MCF 10A (cell line): ENCODE measurements at regions of chr3 and their contacts with region 1.

Region 1: DNA sequence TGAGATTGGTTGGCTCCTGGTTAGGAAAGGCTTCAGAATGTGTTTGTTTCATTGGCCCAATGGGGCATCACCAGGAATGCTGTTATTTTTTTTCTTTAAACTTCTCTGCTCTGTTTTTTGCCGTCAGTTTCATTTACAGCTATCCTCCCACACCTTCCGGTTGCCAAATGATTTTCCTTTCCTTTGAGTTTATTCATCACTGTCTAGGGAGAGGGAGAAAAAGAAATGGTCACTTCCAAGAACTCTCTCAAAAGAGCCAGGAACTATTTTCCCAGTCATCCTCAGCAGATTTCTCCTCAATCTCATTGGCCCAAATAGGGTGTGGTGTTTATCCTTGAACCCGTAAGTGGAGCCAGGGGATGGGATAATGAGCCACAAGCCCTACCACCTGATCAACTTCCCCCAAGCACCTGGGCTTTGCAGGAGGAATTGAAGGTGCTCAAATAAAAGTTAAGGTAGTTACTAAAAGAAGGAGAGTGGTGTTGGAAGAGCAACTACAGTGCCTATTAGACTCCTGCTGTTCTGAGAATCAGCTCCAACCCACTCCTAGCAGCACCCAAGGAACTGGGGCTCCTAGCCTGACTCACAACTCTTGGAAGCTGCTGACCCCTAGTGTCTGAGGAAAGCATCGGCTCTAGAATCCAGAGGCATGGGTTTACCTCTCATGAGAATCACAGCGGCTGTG is 183.8 kb upstream of the IL12A start:
- DNase-seq: peak; percentile 93
- H3K4me3 Mint-ChIP-seq: no peak overlapping the region
- H3K27ac Mint-ChIP-seq: no peak overlapping the region
- H3K4me1 Mint-ChIP-seq: peaks cover 32% of the 10 kb centered on the region
- H3K27me3 Mint-ChIP-seq: no peaks in the 10 kb centered on the region
- CTCF ChIP-seq: peak; percentile 91

Region 2: DNA sequence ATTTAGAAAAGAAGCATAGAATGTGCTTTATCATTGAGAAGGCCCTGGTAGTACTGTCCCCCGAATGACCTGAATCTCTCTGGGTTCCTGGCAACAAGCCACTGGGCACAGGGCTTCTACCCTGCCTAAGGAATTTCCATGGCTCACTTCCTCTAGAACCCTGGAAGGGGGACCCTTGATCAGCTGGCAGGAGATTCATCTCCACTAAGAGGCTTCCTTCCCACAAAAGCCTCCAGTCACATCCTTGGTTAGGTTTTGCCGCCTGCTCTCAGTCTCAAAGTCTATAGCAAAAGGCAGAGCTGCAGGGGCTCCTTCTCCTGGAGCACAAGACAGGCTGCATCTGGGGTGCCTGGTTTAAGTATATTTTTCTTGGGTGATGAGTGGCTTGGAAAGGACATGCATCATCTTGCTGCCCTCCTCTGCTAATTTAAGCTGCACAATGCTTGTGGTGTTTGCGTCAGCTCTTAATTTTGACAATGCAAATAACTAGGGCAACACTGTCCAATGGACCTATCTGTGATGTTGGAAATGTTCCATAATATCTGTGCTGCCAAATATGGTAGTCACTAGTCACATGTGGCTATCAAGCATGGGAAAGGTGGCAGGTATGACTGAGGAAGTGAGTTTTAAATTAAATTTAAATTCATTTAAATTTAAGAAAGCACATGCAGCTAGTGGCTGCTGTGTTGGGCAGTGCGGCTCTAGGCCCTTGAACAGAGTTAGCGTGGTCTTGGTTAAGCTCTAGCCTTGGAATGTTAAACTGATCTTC is 1039.2 kb before region 1 on chr3:
- CTCF ChIA-PET with region 1: no interaction called
- POLR2A ChIA-PET with region 1: no interaction called
- intact Hi-C with region 1: no loop called
- DNase-seq: no peak
- H3K4me3 Mint-ChIP-seq: no peak overlapping the region
- H3K27ac Mint-ChIP-seq: no peak overlapping the region
- H3K4me1 Mint-ChIP-seq: peaks cover 25% of the 10 kb centered on the region
- H3K27me3 Mint-ChIP-seq: no peaks in the 10 kb centered on the region
- CTCF ChIP-seq: no peak

Region 3: GRCh38 chr3:159322322-159322939 is 482.4 kb before region 1 on chr3:
- CTCF ChIA-PET with region 1: interaction called, 7 read pairs
- POLR2A ChIA-PET with region 1: no interaction called
- intact Hi-C with region 1: loop called (anchors 1 kb)
- DNase-seq: peak; percentile 40
- H3K4me3 Mint-ChIP-seq: no peak overlapping the region
- H3K27ac Mint-ChIP-seq: no peak overlapping the region
- H3K4me1 Mint-ChIP-seq: no peaks in the 10 kb centered on the region
- H3K27me3 Mint-ChIP-seq: no peaks in the 10 kb centered on the region
- CTCF ChIP-seq: peak; percentile 60

Region 4: GRCh38 chr3:159616212-159616825 is 188.5 kb before region 1 on chr3:
- CTCF ChIA-PET with region 1: interaction called, 83 read pairs
- POLR2A ChIA-PET with region 1: interaction called, 5 read pairs
- intact Hi-C with region 1: loop called (anchors 1 kb)
- DNase-seq: peak; percentile 67
- H3K4me3 Mint-ChIP-seq: no peak overlapping the region
- H3K27ac Mint-ChIP-seq: no peak overlapping the region
- H3K4me1 Mint-ChIP-seq: peaks cover 14% of the 10 kb centered on the region
- H3K27me3 Mint-ChIP-seq: no peaks in the 10 kb centered on the region
- CTCF ChIP-seq: peak; percentile 83

Region 5: GRCh38 chr3:159726231-159726964 is 78.5 kb before region 1 on chr3:
- CTCF ChIA-PET with region 1: interaction called, 41 read pairs
- POLR2A ChIA-PET with region 1: interaction called, 3 read pairs
- intact Hi-C with region 1: no loop called
- DNase-seq: peak; percentile 88
- H3K4me3 Mint-ChIP-seq: no peak overlapping the region
- H3K27ac Mint-ChIP-seq: peak overlapping the region; percentile 61
- H3K4me1 Mint-ChIP-seq: peaks cover 23% of the 10 kb centered on the region
- H3K27me3 Mint-ChIP-seq: no peaks in the 10 kb centered on the region
- CTCF ChIP-seq: no peak

Region 6: DNA sequence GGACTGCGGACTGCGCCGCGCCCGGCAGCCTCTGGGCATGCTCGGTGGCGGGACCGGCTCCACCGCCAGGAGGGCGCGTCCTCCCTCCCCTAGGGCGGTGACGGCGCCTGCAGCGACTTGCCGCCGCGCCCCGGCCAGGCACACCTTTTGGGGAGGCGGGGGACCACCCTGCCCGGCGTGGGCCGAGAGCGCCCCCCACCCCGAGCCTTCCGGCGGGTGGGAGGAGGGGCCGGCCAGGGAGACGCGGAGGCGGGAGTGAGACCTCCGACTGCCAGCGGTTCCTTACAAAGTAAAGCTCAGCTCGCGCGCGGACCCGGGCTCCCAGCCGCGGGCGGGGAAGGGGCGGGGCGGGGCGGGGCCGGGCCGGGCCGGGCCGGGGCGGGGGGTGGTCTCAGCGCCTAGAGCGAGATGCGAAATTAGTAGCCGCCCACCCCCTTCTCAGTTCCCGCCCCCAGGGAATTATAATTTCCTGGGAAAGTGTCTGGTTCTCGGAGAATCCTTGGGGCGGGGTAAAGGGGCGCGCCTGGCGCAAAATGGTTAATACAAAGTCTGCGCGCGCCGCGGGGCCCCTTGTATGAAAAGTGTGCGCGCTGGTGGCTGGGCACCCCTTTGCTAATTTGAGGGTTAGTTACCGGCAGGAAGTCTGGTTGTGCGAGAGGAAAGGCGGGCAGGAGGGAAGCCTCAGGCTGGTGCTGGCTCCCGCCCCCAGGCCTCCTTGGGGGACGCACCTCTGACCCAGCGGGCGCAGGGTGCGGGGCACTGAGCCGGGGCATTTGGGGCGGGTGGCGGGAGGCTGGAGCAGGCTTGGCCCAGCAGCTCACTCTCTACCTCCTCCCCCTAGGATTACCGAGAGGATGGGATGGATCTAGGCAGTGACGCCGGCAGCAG is 41.0 kb before region 1 on chr3:
- CTCF ChIA-PET with region 1: interaction called, 61 read pairs
- POLR2A ChIA-PET with region 1: interaction called, 28 read pairs
- intact Hi-C with region 1: loop called (anchors 1 kb)
- DNase-seq: peak; percentile 81
- H3K4me3 Mint-ChIP-seq: peak overlapping the region; percentile 81
- H3K27ac Mint-ChIP-seq: peak overlapping the region; percentile 90
- H3K4me1 Mint-ChIP-seq: peaks cover 40% of the 10 kb centered on the region
- H3K27me3 Mint-ChIP-seq: no peaks in the 10 kb centered on the region
- CTCF ChIP-seq: no peak

Region 7: GRCh38 chr3:159787191-159787590 is 17.7 kb before region 1 on chr3:
- CTCF ChIA-PET with region 1: interaction called, 169 read pairs
- POLR2A ChIA-PET with region 1: interaction called, 12 read pairs
- intact Hi-C with region 1: loop called (anchors 1 kb)
- DNase-seq: peak; percentile 94
- H3K4me3 Mint-ChIP-seq: peak overlapping the region; percentile 47
- H3K27ac Mint-ChIP-seq: peak overlapping the region; percentile 89
- H3K4me1 Mint-ChIP-seq: peaks cover 55% of the 10 kb centered on the region
- H3K27me3 Mint-ChIP-seq: no peaks in the 10 kb centered on the region
- CTCF ChIP-seq: no peak